H1 (cell line): ENCODE measurements at regions of chr3 and their contacts with region 1.

Region 1: DNA sequence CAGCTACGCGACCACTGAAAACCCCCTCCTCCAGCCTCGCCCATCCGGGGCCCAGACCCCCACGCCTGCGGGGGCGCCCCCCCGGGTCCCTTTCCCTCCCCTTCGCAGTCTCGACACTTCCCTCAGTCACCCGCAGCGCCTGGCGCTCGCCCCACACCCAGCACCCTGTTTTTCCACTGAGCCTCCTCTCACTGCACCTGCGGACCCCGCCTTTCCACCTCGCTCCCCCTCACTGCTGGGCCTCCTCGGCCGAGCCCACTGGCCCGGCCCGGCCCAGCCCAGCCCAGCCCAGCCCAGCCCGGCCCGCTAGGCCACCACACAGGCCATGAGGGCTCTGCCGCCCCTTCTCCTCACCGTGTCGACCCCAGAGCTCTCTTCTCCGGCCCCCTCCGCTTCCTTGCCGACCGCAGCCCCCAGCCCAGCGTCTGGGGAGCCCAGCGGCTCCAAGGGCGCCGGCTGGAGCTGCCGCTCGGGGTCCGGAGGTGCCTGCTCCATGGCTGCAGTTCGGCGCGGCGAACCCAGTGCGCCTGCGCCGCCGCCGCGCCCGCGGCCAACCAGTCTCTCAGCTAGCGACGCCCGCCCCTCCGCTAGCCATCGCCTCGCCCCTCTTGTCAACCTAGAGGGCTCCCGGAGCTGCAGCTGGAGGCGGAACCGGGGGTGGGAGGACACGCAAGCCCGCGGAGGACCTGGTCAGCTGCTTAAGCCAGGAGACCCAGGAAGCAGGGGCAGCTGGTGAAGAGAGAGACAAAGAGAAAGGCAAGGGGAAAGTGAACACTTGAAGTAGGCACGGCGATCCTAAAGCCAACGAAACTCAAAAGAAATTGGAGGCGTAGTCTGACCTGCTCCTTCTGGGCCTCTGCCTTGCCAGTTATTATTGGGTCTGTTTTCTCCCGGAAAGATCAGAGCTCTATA is at the start of gene SNX4:
- DNase-seq: peak; percentile 60 to 86
- H3K4me3 ChIP-seq: peak within 1 kb of the TSS; percentile 76 to 92 (median 80)
- H3K27ac ChIP-seq: peak within 1 kb of the TSS; percentile 54; the same call in 1 of the 2 replicates
- H3K4me1 ChIP-seq: no peaks in the 10 kb centered on the region; a peak in 1 of 7 replicates
- H3K27me3 ChIP-seq: no peaks in the 10 kb centered on the region
- CTCF ChIP-seq: no peak
- EP300 ChIP-seq: no peak
- POLR2A ChIP-seq: peak in 1 of 2 experiments; percentile 47; a peak in 1 of 3 replicates
- RAD21 ChIP-seq: no peak
- total RNA-seq, gene SNX4: 21.7 and 23.1 TPM in 2 replicates

Region 2: GRCh38 chr3:125585595-125586223 is 65.8 kb after region 1 on chr3:
- CTCF ChIA-PET with region 1: interaction called, 10 read pairs
- POLR2A ChIA-PET with region 1: no interaction called
- DNase-seq: peak in 1 of 2 experiments; percentile 65
- H3K4me3 ChIP-seq: no peak overlapping the region
- H3K27ac ChIP-seq: no peak overlapping the region
- H3K4me1 ChIP-seq: no peaks in the 10 kb centered on the region
- H3K27me3 ChIP-seq: no peaks in the 10 kb centered on the region
- CTCF ChIP-seq: peak; percentile 26 to 91 (median 81)
- EP300 ChIP-seq: no peak
- POLR2A ChIP-seq: no peak
- RAD21 ChIP-seq: peak; percentile 89 to 91

Region 3: DNA sequence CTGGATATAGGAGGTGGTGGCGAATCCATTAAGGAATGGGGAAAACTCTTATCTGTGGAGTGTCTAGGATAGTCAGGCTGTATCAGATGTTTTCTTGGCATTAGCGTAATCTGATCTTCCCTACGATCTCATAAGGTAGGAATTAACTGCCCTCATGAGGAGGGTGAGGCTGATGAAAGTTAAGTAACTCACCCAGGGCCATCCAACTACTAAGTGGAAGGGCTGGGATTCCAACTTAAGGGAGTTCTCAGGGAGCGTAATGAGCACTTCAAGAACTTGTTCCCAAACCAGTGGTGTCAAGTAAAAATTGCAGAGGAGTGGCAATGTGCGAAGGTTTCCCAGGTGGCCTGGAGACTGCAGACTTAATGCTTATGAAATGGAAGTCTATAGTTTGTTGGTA is 131.3 kb after region 1 on chr3:
- CTCF ChIA-PET with region 1: no interaction called
- POLR2A ChIA-PET with region 1: no interaction called
- DNase-seq: peak in 1 of 2 experiments; percentile 36
- H3K4me3 ChIP-seq: no peak overlapping the region
- H3K27ac ChIP-seq: no peak overlapping the region
- H3K4me1 ChIP-seq: peaks cover 0 to 5% (median 0%) of the 10 kb centered on the region in 4 experiments; a peak in 4 of 7 replicates
- H3K27me3 ChIP-seq: no peaks in the 10 kb centered on the region
- CTCF ChIP-seq: no peak
- EP300 ChIP-seq: no peak
- POLR2A ChIP-seq: no peak
- RAD21 ChIP-seq: no peak